Mammary epithelial cell (primary cell): ENCODE measurements at regions of chr1 and their contacts with region 1.

Region 1: DNA sequence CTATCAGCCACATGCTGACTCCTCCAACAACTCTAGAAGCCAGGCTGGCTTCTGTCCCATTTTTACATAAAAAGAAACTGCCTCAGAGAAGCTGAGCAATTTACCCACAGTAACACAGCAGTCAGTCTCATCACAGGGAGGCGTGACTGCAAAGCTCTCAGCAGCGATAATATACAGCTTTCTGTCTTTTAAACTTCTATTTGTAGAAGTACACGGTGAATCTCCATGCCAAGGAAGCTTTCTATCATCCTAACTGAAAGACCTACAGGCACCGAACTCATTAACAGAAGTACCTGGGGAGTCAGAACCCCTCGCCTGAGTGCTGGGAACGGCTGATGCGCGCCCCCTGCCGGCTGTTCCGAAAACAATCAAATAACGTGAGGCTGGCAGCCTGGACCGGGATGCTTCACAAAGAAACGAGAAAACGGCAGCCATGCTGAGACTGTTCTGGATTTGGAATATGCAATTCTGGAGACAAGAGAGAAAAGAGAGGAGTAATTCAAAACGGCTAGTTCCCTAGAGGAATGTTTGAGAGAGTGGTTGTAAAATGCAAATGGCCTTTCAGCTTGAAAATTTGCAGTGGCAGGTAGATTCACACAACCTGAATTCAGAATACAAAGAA is 43.5 kb upstream of the RAB4A start:
- DNase-seq: peak; percentile 62
- H3K4me3 ChIP-seq: no peak overlapping the region
- H3K27ac ChIP-seq: no peak overlapping the region
- H3K4me1 ChIP-seq: peaks cover 57% of the 10 kb centered on the region
- H3K27me3 ChIP-seq: no peaks in the 10 kb centered on the region
- CTCF ChIP-seq: peak; percentile 59 to 94

Region 2: GRCh38 chr1:228691926-228692325 is 535.5 kb before region 1 on chr1:
- CTCF ChIA-PET with region 1: interaction called, 3 read pairs
- dilution Hi-C with region 1: no loop called
- in situ Hi-C with region 1: no loop called
- intact Hi-C with region 1: loop called (anchors 1 kb)
- DNase-seq: peak; percentile 43
- H3K4me3 ChIP-seq: no peak overlapping the region
- H3K27ac ChIP-seq: no peak overlapping the region
- H3K4me1 ChIP-seq: no peaks in the 10 kb centered on the region
- H3K27me3 ChIP-seq: peaks cover 2% of the 10 kb centered on the region
- CTCF ChIP-seq: peak; percentile 36 to 61

Region 3: GRCh38 chr1:228837817-228838716 is 389.3 kb before region 1 on chr1:
- CTCF ChIA-PET with region 1: no interaction called
- dilution Hi-C with region 1: no loop called
- in situ Hi-C with region 1: no loop called
- intact Hi-C with region 1: loop called (anchors 5 kb)
- DNase-seq: peak; percentile 94
- H3K4me3 ChIP-seq: no peak overlapping the region
- H3K27ac ChIP-seq: peak overlapping the region; percentile 22
- H3K4me1 ChIP-seq: peaks cover 20% of the 10 kb centered on the region
- H3K27me3 ChIP-seq: peaks cover 19% of the 10 kb centered on the region
- CTCF ChIP-seq: no peak

Region 4: GRCh38 chr1:229156872-229157271 is 70.5 kb before region 1 on chr1:
- CTCF ChIA-PET with region 1: no interaction called
- dilution Hi-C with region 1: no loop called
- in situ Hi-C with region 1: no loop called
- intact Hi-C with region 1: loop called (anchors 5 kb)
- DNase-seq: no peak
- H3K4me3 ChIP-seq: no peak overlapping the region
- H3K27ac ChIP-seq: no peak overlapping the region
- H3K4me1 ChIP-seq: no peaks in the 10 kb centered on the region
- H3K27me3 ChIP-seq: no peaks in the 10 kb centered on the region
- CTCF ChIP-seq: peak; percentile 11 to 55

Region 5: DNA sequence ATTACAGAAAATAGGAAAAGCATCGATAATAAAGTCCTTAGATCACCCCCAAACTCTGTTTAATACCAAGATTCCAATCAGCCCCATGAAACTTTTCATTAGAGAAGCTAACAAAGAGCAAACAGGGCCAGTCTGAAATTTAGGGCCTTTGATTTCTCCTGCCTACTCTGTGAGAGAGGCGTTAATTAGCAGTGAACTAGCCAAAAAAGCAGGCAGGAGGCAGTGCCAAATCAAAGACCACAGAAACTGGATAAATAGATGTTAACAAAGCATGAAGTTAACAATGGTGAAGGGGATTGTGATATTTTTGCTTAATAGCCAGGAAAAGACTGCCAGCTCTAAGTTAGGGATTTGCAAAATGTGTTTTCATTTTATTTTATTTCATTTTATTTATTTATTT is 387.3 kb after region 1 on chr1:
- CTCF ChIA-PET with region 1: no interaction called
- dilution Hi-C with region 1: no loop called
- in situ Hi-C with region 1: no loop called
- intact Hi-C with region 1: no loop called
- DNase-seq: no peak
- H3K4me3 ChIP-seq: no peak overlapping the region
- H3K27ac ChIP-seq: no peak overlapping the region
- H3K4me1 ChIP-seq: no peaks in the 10 kb centered on the region
- H3K27me3 ChIP-seq: no peaks in the 10 kb centered on the region
- CTCF ChIP-seq: no peak